Esophagus muscularis mucosa (tissue), 4 donors: ENCODE measurements at regions of chr1 and their contacts with region 1.

Region 1: DNA sequence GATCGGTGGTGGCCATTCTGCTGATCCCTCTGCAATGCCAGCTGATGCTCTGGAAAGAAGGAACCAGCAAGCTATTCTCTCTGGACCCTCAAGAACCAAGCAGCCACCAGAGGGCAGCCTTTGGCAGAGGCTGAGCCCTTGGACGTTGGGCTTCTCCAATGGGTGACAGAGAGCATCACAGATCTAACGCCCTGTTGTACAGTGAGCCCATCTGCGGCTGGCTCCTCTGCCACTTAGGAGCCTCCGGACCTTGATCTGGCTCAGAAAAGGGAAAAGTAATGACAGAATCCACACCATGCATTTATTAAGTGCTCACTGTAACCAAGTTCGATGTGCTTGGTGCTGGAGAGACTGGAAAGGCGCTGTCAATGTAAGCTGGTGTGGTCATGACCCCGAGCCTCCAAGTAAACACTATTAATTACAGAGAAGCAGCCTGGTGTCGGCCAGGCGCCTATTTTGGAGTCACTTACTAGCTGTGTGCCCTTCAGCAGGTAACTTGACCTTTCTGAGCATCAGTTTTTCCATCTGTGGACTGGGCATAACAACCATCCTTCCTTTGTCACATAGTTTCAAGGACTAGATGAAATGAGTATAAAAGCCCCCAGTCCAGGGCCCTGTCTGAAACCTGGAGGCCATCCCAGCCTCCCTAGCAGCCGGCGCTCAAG is 34.9 kb downstream of the ECE1 start:
- DNase-seq: peak; percentile 97
- H3K4me3 ChIP-seq: no peak overlapping the region
- H3K27ac ChIP-seq: peak overlapping the region; percentile 53 to 85 (median 70)
- H3K4me1 ChIP-seq: peaks cover 34 to 50% (median 47%) of the 10 kb centered on the region in 4 donors
- H3K27me3 ChIP-seq: no peaks in the 10 kb centered on the region
- CTCF ChIP-seq: peak; percentile 84 to 86 (median 85)
- EP300 ChIP-seq: no peak
- POLR2A ChIP-seq: no peak

Region 2: GRCh38 chr1:21270086-21270689 is 14.8 kb after region 1 on chr1:
- intact Hi-C with region 1: loop called (anchors 1 kb)
- DNase-seq: no peak
- H3K4me3 ChIP-seq: no peak overlapping the region
- H3K27ac ChIP-seq: no peak overlapping the region
- H3K4me1 ChIP-seq: peaks cover 38 to 52% (median 47%) of the 10 kb centered on the region in 4 donors
- H3K27me3 ChIP-seq: no peaks in the 10 kb centered on the region
- CTCF ChIP-seq: peak; percentile 78 to 96 (median 84)
- EP300 ChIP-seq: no peak
- POLR2A ChIP-seq: no peak

Region 3: GRCh38 chr1:21344750-21345443 is 89.5 kb after region 1 on chr1:
- intact Hi-C with region 1: loop called (anchors 5 kb)
- DNase-seq: no peak
- H3K4me3 ChIP-seq: peak overlapping the region; percentile 71 to 91 (median 81)
- H3K27ac ChIP-seq: peak overlapping the region; percentile 91 to 95 (median 93)
- H3K4me1 ChIP-seq: peaks cover 53 to 69% (median 65%) of the 10 kb centered on the region in 4 donors
- H3K27me3 ChIP-seq: no peaks in the 10 kb centered on the region
- CTCF ChIP-seq: no peak
- EP300 ChIP-seq: no peak
- POLR2A ChIP-seq: no peak